CD8-positive, alpha-beta T cell (primary cell): ENCODE measurements at regions of chr1 and their contacts with region 1.

Region 1: GRCh38 chr1:12124693-12125421 is 41.9 kb upstream of the TNFRSF1B start:
- DNase-seq: peak; percentile 69 to 91 (median 80)
- ATAC-seq: peak; percentile 84
- H3K4me3 ChIP-seq: no peak overlapping the region
- H3K4me3 Mint-ChIP-seq: no peak overlapping the region
- H3K27ac ChIP-seq: no peak overlapping the region
- H3K27ac Mint-ChIP-seq: no peak overlapping the region
- H3K4me1 ChIP-seq: peaks cover 27% of the 10 kb centered on the region
- H3K4me1 Mint-ChIP-seq: peaks cover 29% of the 10 kb centered on the region
- H3K27me3 ChIP-seq: no peaks in the 10 kb centered on the region
- H3K27me3 Mint-ChIP-seq: no peaks in the 10 kb centered on the region
- CTCF ChIP-seq: peak; percentile 97

Region 2: GRCh38 chr1:10374442-10374860 is 1750.4 kb before region 1 on chr1:
- CTCF ChIA-PET with region 1: no interaction called
- POLR2A ChIA-PET with region 1: no interaction called
- intact Hi-C with region 1: no loop called
- DNase-seq: no peak
- ATAC-seq: no peak
- H3K4me3 ChIP-seq: no peak overlapping the region
- H3K4me3 Mint-ChIP-seq: no peak overlapping the region
- H3K27ac ChIP-seq: no peak overlapping the region
- H3K27ac Mint-ChIP-seq: no peak overlapping the region
- H3K4me1 ChIP-seq: no peaks in the 10 kb centered on the region
- H3K4me1 Mint-ChIP-seq: no peaks in the 10 kb centered on the region
- H3K27me3 ChIP-seq: no peaks in the 10 kb centered on the region
- H3K27me3 Mint-ChIP-seq: no peaks in the 10 kb centered on the region
- CTCF ChIP-seq: no peak

Region 3: GRCh38 chr1:10615332-10615731 is 1509.5 kb before region 1 on chr1:
- CTCF ChIA-PET with region 1: no interaction called
- POLR2A ChIA-PET with region 1: no interaction called
- intact Hi-C with region 1: no loop called
- DNase-seq: no peak
- ATAC-seq: no peak
- H3K4me3 ChIP-seq: no peak overlapping the region
- H3K4me3 Mint-ChIP-seq: no peak overlapping the region
- H3K27ac ChIP-seq: no peak overlapping the region
- H3K27ac Mint-ChIP-seq: no peak overlapping the region
- H3K4me1 ChIP-seq: no peaks in the 10 kb centered on the region
- H3K4me1 Mint-ChIP-seq: no peaks in the 10 kb centered on the region
- H3K27me3 ChIP-seq: no peaks in the 10 kb centered on the region
- H3K27me3 Mint-ChIP-seq: no peaks in the 10 kb centered on the region
- CTCF ChIP-seq: no peak

Region 4: DNA sequence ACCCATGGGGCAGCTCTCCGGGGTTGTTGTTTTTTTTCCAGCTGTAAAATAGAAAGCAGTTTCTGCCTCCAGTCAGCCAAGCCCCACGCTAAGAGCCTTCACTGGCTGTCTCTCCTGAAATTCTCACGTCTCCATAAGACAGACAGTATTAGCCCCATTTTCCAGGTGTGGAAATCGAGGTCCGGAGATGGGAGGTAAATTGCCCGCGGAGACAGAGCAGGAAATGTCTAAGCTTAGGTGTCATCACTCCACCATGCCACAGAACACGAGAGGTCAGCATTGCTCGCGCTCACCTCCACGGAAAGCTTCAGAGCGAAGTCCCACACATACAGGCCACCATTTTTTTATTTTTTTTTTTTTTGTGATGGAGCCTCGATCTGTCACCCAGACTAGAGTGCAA is 17.1 kb before region 1 on chr1:
- CTCF ChIA-PET with region 1: interaction called, 19 read pairs
- POLR2A ChIA-PET with region 1: no interaction called
- intact Hi-C with region 1: no loop called
- DNase-seq: no peak
- ATAC-seq: no peak
- H3K4me3 ChIP-seq: no peak overlapping the region
- H3K4me3 Mint-ChIP-seq: no peak overlapping the region
- H3K27ac ChIP-seq: no peak overlapping the region
- H3K27ac Mint-ChIP-seq: no peak overlapping the region
- H3K4me1 ChIP-seq: no peaks in the 10 kb centered on the region
- H3K4me1 Mint-ChIP-seq: peaks cover 3% of the 10 kb centered on the region
- H3K27me3 ChIP-seq: no peaks in the 10 kb centered on the region
- H3K27me3 Mint-ChIP-seq: no peaks in the 10 kb centered on the region
- CTCF ChIP-seq: no peak

Region 5: GRCh38 chr1:12153181-12153785 is 28.4 kb after region 1 on chr1:
- CTCF ChIA-PET with region 1: interaction called, 97 read pairs
- POLR2A ChIA-PET with region 1: interaction called, 7 read pairs
- intact Hi-C with region 1: loop called in 1 of 2 experiments (anchors 2 kb)
- DNase-seq: peak in 3 of 9 experiments; percentile 47 to 81 (median 66)
- ATAC-seq: no peak
- H3K4me3 ChIP-seq: no peak overlapping the region
- H3K4me3 Mint-ChIP-seq: peak overlapping the region; percentile 8
- H3K27ac ChIP-seq: peak overlapping the region in 1 of 2 experiments; percentile 89
- H3K27ac Mint-ChIP-seq: peak overlapping the region; percentile 80
- H3K4me1 ChIP-seq: peaks cover 69% of the 10 kb centered on the region
- H3K4me1 Mint-ChIP-seq: peaks cover 76% of the 10 kb centered on the region
- H3K27me3 ChIP-seq: no peaks in the 10 kb centered on the region
- H3K27me3 Mint-ChIP-seq: no peaks in the 10 kb centered on the region
- CTCF ChIP-seq: no peak

Region 6: GRCh38 chr1:12177999-12178441 is 53.2 kb after region 1 on chr1:
- CTCF ChIA-PET with region 1: interaction called, 155 read pairs
- POLR2A ChIA-PET with region 1: interaction called, 14 read pairs
- intact Hi-C with region 1: loop called (anchors 1 kb)
- DNase-seq: peak; percentile 77 to 97 (median 95)
- ATAC-seq: peak; percentile 68
- H3K4me3 ChIP-seq: peak overlapping the region; percentile 34 to 36
- H3K4me3 Mint-ChIP-seq: peak overlapping the region; percentile 82
- H3K27ac ChIP-seq: peak overlapping the region; percentile 71 to 94
- H3K27ac Mint-ChIP-seq: peak overlapping the region; percentile 99
- H3K4me1 ChIP-seq: peaks cover 75% of the 10 kb centered on the region
- H3K4me1 Mint-ChIP-seq: peaks cover 77% of the 10 kb centered on the region
- H3K27me3 ChIP-seq: no peaks in the 10 kb centered on the region
- H3K27me3 Mint-ChIP-seq: no peaks in the 10 kb centered on the region
- CTCF ChIP-seq: no peak

Region 7: DNA sequence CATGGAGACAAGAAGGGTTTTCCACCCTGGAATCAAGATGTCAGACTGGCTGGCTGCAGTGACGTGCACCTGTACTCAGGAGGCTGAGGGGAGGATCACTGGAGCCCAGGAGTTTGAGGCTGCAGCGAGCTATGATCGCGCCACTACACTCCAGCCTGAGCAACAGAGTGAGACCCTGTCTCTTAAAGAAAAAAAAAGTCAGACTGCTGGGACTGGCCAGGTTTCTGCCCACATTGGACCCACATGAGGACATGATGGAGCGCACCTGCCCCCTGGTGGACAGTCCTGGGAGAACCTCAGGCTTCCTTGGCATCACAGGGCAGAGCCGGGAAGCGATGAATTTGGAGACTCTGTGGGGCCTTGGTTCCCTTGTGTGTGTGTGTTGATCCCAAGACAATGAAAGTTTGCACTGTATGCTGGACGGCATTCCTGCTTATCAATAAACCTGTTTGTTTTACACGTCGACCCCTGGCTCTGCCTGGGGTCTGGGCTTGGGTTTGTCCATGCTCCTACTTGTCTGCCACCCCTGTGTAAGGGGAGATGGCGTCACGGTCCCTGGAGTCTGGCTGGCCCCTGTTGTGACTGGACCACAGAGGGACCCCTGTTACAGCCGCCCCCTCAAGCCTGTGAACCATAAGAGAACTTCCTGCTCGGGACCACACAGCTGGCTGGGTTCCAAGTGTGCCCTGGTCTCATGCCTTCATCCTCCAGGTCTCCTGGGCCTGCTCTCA is 84.1 kb after region 1 on chr1:
- CTCF ChIA-PET with region 1: interaction called, 674 read pairs
- POLR2A ChIA-PET with region 1: interaction called, 39 read pairs
- intact Hi-C with region 1: loop called (anchors 1 kb)
- DNase-seq: peak; percentile 78 to 94 (median 86)
- ATAC-seq: peak; percentile 72
- H3K4me3 ChIP-seq: no peak overlapping the region
- H3K4me3 Mint-ChIP-seq: peak overlapping the region; percentile 35
- H3K27ac ChIP-seq: peak overlapping the region in 1 of 2 experiments; percentile 58
- H3K27ac Mint-ChIP-seq: peak overlapping the region; percentile 76
- H3K4me1 ChIP-seq: peaks cover 41% of the 10 kb centered on the region
- H3K4me1 Mint-ChIP-seq: peaks cover 54% of the 10 kb centered on the region
- H3K27me3 ChIP-seq: no peaks in the 10 kb centered on the region
- H3K27me3 Mint-ChIP-seq: no peaks in the 10 kb centered on the region
- CTCF ChIP-seq: peak; percentile 93

Region 8: GRCh38 chr1:12275369-12275768 is 150.5 kb after region 1 on chr1:
- CTCF ChIA-PET with region 1: interaction called, 16 read pairs
- POLR2A ChIA-PET with region 1: no interaction called
- intact Hi-C with region 1: no loop called
- DNase-seq: peak in 8 of 9 experiments; percentile 5 to 52 (median 34)
- ATAC-seq: no peak
- H3K4me3 ChIP-seq: no peak overlapping the region
- H3K4me3 Mint-ChIP-seq: no peak overlapping the region
- H3K27ac ChIP-seq: no peak overlapping the region
- H3K27ac Mint-ChIP-seq: no peak overlapping the region
- H3K4me1 ChIP-seq: no peaks in the 10 kb centered on the region
- H3K4me1 Mint-ChIP-seq: peaks cover 6% of the 10 kb centered on the region
- H3K27me3 ChIP-seq: no peaks in the 10 kb centered on the region
- H3K27me3 Mint-ChIP-seq: no peaks in the 10 kb centered on the region
- CTCF ChIP-seq: peak; percentile 37